ENCODE measurements at regions of chr13 and their contacts with region 1.

Region 1: GRCh38 chr13:24270639-24271141 is 38.7 kb upstream of the C1QTNF9 start:
- DNase-seq: peak; percentile 78
- H3K4me3 Mint-ChIP-seq: peak overlapping the region; percentile 91
- H3K27ac Mint-ChIP-seq: peak overlapping the region; percentile 98
- H3K4me1 Mint-ChIP-seq: peaks cover 75% of the 10 kb centered on the region
- H3K27me3 Mint-ChIP-seq: no peaks in the 10 kb centered on the region

Region 2: GRCh38 chr13:23871616-23872220 is 399.0 kb before region 1 on chr13:
- CTCF ChIA-PET with region 1: no interaction called
- intact Hi-C with region 1: no loop called
- DNase-seq: no peak
- H3K4me3 Mint-ChIP-seq: no peak overlapping the region
- H3K27ac Mint-ChIP-seq: no peak overlapping the region
- H3K4me1 Mint-ChIP-seq: no peaks in the 10 kb centered on the region
- H3K27me3 Mint-ChIP-seq: no peaks in the 10 kb centered on the region

Region 3: DNA sequence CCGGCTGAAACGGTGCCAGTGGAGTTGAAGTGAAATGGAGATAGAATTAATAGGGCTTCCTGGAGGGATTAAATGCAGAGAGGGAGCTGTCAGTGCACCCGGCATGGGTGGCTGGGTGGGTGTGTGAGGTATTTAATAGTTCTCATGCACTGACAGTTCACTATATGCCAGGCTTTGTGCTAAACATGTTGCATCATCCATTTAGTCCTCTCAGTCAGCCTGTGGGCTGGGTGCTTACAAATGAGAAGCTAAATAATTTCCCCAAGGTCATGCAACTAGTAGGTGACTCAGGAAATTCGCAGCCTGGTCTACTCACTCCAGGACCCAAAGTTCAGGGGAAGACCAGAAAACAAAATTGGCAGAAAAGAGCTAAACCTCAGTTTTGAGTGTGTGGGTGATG is 173.6 kb before region 1 on chr13:
- CTCF ChIA-PET with region 1: interaction called, 3 read pairs
- intact Hi-C with region 1: loop called (anchors 2 kb)
- DNase-seq: peak; percentile 69
- H3K4me3 Mint-ChIP-seq: no peak overlapping the region
- H3K27ac Mint-ChIP-seq: peak overlapping the region; percentile 65
- H3K4me1 Mint-ChIP-seq: peaks cover 17% of the 10 kb centered on the region
- H3K27me3 Mint-ChIP-seq: peaks cover 6% of the 10 kb centered on the region

Region 4: DNA sequence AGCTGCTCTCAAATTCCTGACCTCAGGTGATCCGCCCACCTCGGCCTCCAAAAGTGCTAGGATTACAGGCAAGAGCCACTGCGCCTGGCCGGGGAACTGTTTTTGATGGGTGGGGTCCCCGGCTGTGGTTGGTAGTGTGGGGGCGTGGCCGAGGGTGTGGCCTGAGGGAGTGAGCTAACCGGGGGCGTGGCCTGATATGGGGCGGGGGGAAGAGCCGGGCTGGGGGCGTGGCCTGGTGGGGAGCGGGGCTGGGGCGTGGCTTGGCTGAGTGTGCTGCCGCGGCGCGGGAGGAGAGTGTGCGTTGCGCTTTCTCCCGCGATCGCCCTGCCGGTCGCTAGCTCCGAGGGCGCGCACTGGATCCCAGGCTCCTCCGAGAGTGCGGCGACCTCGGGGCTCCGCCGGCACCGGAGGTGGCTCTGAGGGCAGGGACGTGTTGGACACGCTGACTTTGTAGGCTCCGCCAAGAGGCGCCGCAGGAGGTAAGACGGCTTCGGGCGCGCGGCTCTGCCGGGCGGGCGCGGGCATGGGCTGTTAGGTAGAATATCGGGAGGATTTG is 110.2 kb before region 1 on chr13 and contains the start of gene SPATA13:
- CTCF ChIA-PET with region 1: interaction called, 3 read pairs
- intact Hi-C with region 1: loop called (anchors 5 kb)
- DNase-seq: peak; percentile 95
- H3K4me3 Mint-ChIP-seq: peak within 1 kb of the TSS; percentile 86
- H3K27ac Mint-ChIP-seq: no peak within 1 kb of the TSS
- H3K4me1 Mint-ChIP-seq: peaks cover 12% of the 10 kb centered on the region
- H3K27me3 Mint-ChIP-seq: peaks cover 8% of the 10 kb centered on the region
- total RNA-seq, gene SPATA13: 56.8 to 57.4 TPM

Region 5: DNA sequence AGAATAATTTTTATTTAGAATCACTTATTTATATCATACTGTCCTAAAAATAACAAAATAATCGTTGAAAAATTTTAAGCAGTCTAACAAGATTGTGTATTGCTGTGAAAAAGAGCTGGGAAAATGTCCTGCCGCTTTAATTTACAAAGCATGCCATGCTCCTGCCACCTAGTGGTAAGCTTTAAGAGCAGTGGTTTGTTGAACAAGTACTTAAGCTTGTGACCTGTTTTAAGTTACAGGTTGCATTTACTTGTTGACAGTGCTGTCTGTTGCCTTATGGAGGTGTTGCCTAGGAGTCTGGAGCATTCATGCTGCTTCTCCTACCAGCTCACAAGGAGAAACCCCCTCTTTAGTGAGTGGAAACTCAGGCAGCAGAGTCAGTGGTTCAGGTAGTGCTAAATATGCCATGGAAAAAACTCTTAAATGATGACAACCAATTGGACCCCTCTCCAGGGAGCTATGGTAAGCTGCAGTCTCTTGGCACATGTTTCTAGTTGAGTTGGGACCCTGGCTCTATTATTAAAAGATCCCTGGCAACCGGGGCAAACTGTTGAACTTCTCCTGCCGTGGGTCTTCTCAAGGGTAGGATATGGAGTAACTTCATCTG is 41.7 kb before region 1 on chr13:
- CTCF ChIA-PET with region 1: interaction called, 11 read pairs
- intact Hi-C with region 1: loop called (anchors 1 kb)
- DNase-seq: peak; percentile 63
- H3K4me3 Mint-ChIP-seq: no peak overlapping the region
- H3K27ac Mint-ChIP-seq: no peak overlapping the region
- H3K4me1 Mint-ChIP-seq: peaks cover 34% of the 10 kb centered on the region
- H3K27me3 Mint-ChIP-seq: no peaks in the 10 kb centered on the region

Region 6: DNA sequence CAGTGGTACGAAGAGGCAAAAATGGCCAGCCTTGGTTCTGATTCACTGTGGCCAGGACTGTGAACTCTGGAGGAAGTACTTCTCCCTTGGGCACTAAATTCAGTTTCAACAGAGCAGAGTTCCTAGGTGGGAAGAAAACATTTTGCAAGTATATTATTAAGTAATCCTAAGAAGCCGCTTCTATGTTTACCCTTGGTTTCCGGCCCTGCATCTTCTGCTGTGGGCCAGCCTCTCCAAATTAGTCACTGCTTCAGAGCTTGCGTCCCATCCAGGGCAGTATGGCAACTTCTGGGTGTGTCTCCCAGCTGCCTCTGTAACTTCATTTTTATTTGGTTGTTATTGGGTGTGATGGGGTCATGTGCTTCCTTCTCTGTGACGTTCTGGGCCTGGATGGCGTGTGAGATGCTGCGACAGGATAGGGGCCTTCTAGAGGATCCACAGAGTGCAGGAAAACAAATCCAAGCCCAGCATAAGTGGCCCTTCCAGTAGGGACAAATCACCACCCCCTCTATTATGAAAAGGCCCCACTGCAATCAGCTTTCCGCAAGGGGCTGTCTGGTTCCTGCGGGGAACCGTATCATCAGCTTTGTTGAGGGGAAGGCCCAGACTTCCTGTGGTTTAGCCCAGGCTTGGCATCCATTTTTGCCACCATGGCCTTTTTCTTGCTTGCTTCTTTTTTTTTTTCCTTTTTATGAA is 16.4 kb before region 1 on chr13:
- CTCF ChIA-PET with region 1: interaction called, 25 read pairs
- intact Hi-C with region 1: loop called (anchors 1 kb)
- DNase-seq: peak; percentile 79
- H3K4me3 Mint-ChIP-seq: peak overlapping the region; percentile 87
- H3K27ac Mint-ChIP-seq: peak overlapping the region; percentile 96
- H3K4me1 Mint-ChIP-seq: peaks cover 77% of the 10 kb centered on the region
- H3K27me3 Mint-ChIP-seq: no peaks in the 10 kb centered on the region

Region 7: GRCh38 chr13:24280720-24281119 is 10.0 kb after region 1 on chr13:
- CTCF ChIA-PET with region 1: no interaction called
- intact Hi-C with region 1: no loop called
- DNase-seq: no peak
- H3K4me3 Mint-ChIP-seq: no peak overlapping the region
- H3K27ac Mint-ChIP-seq: no peak overlapping the region
- H3K4me1 Mint-ChIP-seq: peaks cover 63% of the 10 kb centered on the region
- H3K27me3 Mint-ChIP-seq: no peaks in the 10 kb centered on the region

Region 8: GRCh38 chr13:24307211-24308067 is 36.7 kb after region 1 on chr13:
- CTCF ChIA-PET with region 1: no interaction called
- intact Hi-C with region 1: no loop called
- DNase-seq: no peak
- H3K4me3 Mint-ChIP-seq: no peak overlapping the region
- H3K27ac Mint-ChIP-seq: no peak overlapping the region
- H3K4me1 Mint-ChIP-seq: no peaks in the 10 kb centered on the region
- H3K27me3 Mint-ChIP-seq: no peaks in the 10 kb centered on the region

Region 9: DNA sequence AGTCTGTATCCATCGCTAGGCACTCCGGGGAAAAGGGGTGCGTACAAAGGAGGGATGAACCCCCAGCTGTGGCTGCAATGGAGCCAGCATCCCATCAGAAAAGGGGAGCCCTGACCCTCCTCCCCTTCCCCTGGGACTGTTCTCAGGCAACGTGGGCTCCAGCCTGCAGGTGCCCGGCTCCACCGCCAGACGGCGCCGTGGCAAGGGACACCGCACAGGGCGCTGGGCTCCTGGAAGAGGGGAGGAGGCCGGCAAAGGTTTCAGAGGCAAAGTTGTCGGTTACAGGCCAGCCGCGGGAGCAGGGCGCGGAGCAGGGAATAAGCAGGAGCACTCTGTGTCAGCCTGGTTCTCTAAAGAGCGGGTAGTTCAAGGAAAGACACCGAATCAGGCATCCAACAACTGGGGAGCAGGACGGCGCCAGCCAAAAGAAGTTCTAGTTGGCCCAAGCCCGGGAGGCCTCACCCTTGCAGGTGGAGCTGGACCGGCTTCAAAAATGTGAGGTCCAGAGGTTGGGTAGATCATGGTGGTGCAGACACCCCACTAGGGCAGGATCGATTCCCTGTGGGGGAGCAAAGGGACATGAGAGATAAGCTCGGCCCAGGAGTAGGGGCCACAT is 356.5 kb after region 1 on chr13:
- CTCF ChIA-PET with region 1: no interaction called
- intact Hi-C with region 1: loop called (anchors 5 kb)
- DNase-seq: no peak
- H3K4me3 Mint-ChIP-seq: no peak overlapping the region
- H3K27ac Mint-ChIP-seq: no peak overlapping the region
- H3K4me1 Mint-ChIP-seq: peaks cover 36% of the 10 kb centered on the region
- H3K27me3 Mint-ChIP-seq: no peaks in the 10 kb centered on the region

Region 10: GRCh38 chr13:24727731-24728601 is 457.3 kb after region 1 on chr13:
- CTCF ChIA-PET with region 1: no interaction called
- intact Hi-C with region 1: no loop called
- DNase-seq: peak; percentile 77
- H3K4me3 Mint-ChIP-seq: no peak overlapping the region
- H3K27ac Mint-ChIP-seq: no peak overlapping the region
- H3K4me1 Mint-ChIP-seq: no peaks in the 10 kb centered on the region
- H3K27me3 Mint-ChIP-seq: peaks cover 4% of the 10 kb centered on the region

Region 11: GRCh38 chr13:24922745-24923591 is 652.3 kb after region 1 on chr13:
- CTCF ChIA-PET with region 1: no interaction called
- intact Hi-C with region 1: loop called (anchors 10 kb)
- DNase-seq: peak; percentile 96
- H3K4me3 Mint-ChIP-seq: peak overlapping the region; percentile 94
- H3K27ac Mint-ChIP-seq: peak overlapping the region; percentile 85
- H3K4me1 Mint-ChIP-seq: peaks cover 8% of the 10 kb centered on the region
- H3K27me3 Mint-ChIP-seq: no peaks in the 10 kb centered on the region

Measured in activated naive CD4-positive, alpha-beta T cell treated with anti-CD3 and anti-CD28 coated beads for 36 hours (primary cell).